RWPE1 (cell line): ENCODE measurements at regions of chr7 and their contacts with region 1.

Region 1: GRCh38 chr7:117068511-117069145 is 115.3 kb downstream of the ST7 start:
- DNase-seq: no peak
- H3K27ac ChIP-seq: no peak overlapping the region
- CTCF ChIP-seq: no peak

Region 2: GRCh38 chr7:116872026-116872425 is 196.6 kb before region 1 on chr7:
- CTCF ChIA-PET with region 1: no interaction called
- POLR2A ChIA-PET with region 1: no interaction called
- DNase-seq: no peak
- H3K27ac ChIP-seq: no peak overlapping the region
- CTCF ChIP-seq: no peak

Region 3: GRCh38 chr7:116999311-116999710 is 69.3 kb before region 1 on chr7:
- CTCF ChIA-PET with region 1: interaction called, 10 read pairs
- POLR2A ChIA-PET with region 1: no interaction called
- DNase-seq: no peak
- H3K27ac ChIP-seq: no peak overlapping the region
- CTCF ChIP-seq: no peak